HepG2 (cell line): ENCODE measurements at regions of chr15 and their contacts with region 1.

Region 1: DNA sequence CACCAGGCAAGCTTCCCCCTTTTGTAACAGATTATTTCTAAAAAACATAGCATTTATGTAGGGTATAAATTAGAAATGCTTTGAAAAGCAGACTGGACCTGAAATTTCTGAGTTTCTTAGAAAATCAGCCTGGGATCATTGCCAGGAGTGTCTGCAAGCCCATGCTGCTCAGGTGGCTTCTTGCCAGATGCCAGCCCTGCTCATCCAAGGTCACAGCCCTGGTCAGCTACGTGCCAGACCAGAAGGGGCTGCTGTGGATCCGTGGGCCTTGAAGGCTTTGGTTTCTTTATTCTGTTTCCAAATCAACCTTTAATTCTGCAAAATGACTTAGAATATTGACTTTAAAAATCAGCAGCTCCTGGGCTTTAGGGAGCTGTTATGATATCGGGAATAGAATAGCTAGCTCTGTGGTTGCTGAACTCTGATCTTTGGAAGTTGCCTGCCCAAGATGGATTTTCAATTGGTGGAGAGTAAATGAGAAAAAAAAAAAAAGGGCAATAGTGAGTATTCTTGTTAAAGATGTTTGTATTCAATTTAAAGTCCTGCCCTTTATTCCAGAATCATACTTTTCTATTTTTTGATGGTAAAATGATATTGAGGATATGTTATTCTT is 370.1 kb upstream of the ONECUT1 start:
- DNase-seq: peak; percentile 7
- ATAC-seq: peak; percentile 36; the same call in 1 of the 3 replicates
- H3K4me3 ChIP-seq: no peak overlapping the region
- H3K27ac ChIP-seq: no peak overlapping the region
- H3K4me1 ChIP-seq: peaks cover 11% of the 10 kb centered on the region
- H3K27me3 ChIP-seq: no peaks in the 10 kb centered on the region; a peak in 1 of 5 replicates
- CTCF ChIP-seq: peak; percentile 44
- EP300 ChIP-seq: no peak
- POLR2A ChIP-seq: no peak
- RAD21 ChIP-seq: no peak

Region 2: GRCh38 chr15:54282228-54282836 is 1122.1 kb after region 1 on chr15:
- CTCF ChIA-PET with region 1: no interaction called
- POLR2A ChIA-PET with region 1: no interaction called
- in situ Hi-C with region 1: no loop called
- intact Hi-C with region 1: loop called (anchors 5 kb)
- DNase-seq: peak; percentile 0
- ATAC-seq: peak; percentile 57; the same call in 2 of the 3 replicates
- H3K4me3 ChIP-seq: no peak overlapping the region
- H3K27ac ChIP-seq: no peak overlapping the region
- H3K4me1 ChIP-seq: no peaks in the 10 kb centered on the region
- H3K27me3 ChIP-seq: no peaks in the 10 kb centered on the region
- CTCF ChIP-seq: peak; percentile 57
- EP300 ChIP-seq: no peak
- POLR2A ChIP-seq: no peak
- RAD21 ChIP-seq: no peak